Caco-2 (cell line): ENCODE measurements at regions of chr10 and their contacts with region 1.

Region 1: DNA sequence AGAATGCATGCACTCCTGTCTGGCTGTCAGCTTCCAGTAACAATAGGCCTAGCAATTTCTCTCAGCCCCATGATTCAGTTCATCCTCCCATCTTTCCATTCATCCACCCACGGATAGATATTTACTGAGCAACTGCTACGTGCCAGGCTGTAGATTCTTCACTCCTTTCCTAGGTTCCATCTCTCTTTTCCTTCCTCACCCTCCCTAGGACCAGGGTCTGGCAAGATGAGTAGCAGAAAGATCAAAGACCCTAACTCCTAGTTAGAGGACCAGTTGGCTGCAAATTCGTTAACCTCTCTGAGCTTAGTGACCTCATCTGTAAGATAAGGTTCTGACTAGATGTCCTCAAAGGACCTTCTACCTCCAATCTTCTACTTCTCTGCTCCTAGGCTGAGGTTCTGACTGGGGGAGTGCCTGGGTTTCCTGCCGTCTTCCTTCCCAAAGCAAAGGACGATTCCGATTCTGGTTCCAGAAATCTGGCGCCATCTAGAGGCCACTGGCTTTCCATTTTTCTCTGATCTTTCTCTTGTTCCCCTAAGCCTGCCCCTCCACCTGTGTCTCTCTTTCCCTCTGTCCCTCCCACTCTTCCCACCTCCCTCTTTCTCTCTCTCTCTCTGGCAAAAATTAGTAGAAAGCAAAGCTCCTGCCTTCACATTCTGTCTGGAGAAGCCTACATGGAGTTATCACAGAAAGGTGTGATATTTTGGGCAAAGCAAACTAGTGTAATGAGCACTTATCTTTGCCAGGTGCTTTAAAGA is 26.2 kb downstream of the TBATA start:
- DNase-seq: peak; percentile 79 to 85
- H3K4me3 ChIP-seq: no peak overlapping the region
- H3K4me3 Mint-ChIP-seq: no peak overlapping the region
- H3K27ac Mint-ChIP-seq: no peak overlapping the region
- H3K4me1 ChIP-seq: 0 out of 2 replicates have a peak, but pooled peaks cover 5% of the 10 kb centered on the region
- H3K4me1 Mint-ChIP-seq: peaks cover 13% of the 10 kb centered on the region
- H3K27me3 ChIP-seq: no peaks in the 10 kb centered on the region
- H3K27me3 Mint-ChIP-seq: no peaks in the 10 kb centered on the region
- CTCF ChIP-seq: peak; percentile 94 to 96

Region 2: GRCh38 chr10:69222157-69223027 is 1536.5 kb before region 1 on chr10:
- CTCF ChIA-PET with region 1: interaction called, 10 read pairs
- POLR2A ChIA-PET with region 1: no interaction called
- intact Hi-C with region 1: no loop called
- DNase-seq: peak; percentile 89 to 96
- H3K4me3 ChIP-seq: no peak overlapping the region
- H3K4me3 Mint-ChIP-seq: peak overlapping the region; percentile 68
- H3K27ac Mint-ChIP-seq: peak overlapping the region; percentile 86
- H3K4me1 ChIP-seq: peaks cover 60% of the 10 kb centered on the region
- H3K4me1 Mint-ChIP-seq: peaks cover 24% of the 10 kb centered on the region
- H3K27me3 ChIP-seq: no peaks in the 10 kb centered on the region
- H3K27me3 Mint-ChIP-seq: no peaks in the 10 kb centered on the region
- CTCF ChIP-seq: peak; percentile 84 to 89

Region 3: GRCh38 chr10:70461215-70461986 is 297.5 kb before region 1 on chr10:
- CTCF ChIA-PET with region 1: interaction called, 6 read pairs
- POLR2A ChIA-PET with region 1: no interaction called
- intact Hi-C with region 1: loop called (anchors 1 kb)
- DNase-seq: peak; percentile 76 to 81
- H3K4me3 ChIP-seq: no peak overlapping the region
- H3K4me3 Mint-ChIP-seq: no peak overlapping the region
- H3K27ac Mint-ChIP-seq: no peak overlapping the region
- H3K4me1 ChIP-seq: no peaks in the 10 kb centered on the region; the same call in 1 of the 2 replicates
- H3K4me1 Mint-ChIP-seq: peaks cover 14% of the 10 kb centered on the region
- H3K27me3 ChIP-seq: no peaks in the 10 kb centered on the region
- H3K27me3 Mint-ChIP-seq: no peaks in the 10 kb centered on the region
- CTCF ChIP-seq: peak; percentile 97 to 99

Region 4: GRCh38 chr10:70558871-70559810 is 199.8 kb before region 1 on chr10:
- CTCF ChIA-PET with region 1: interaction called, 4 read pairs
- POLR2A ChIA-PET with region 1: no interaction called
- intact Hi-C with region 1: loop called (anchors 2 kb)
- DNase-seq: peak; percentile 65 to 70
- H3K4me3 ChIP-seq: no peak overlapping the region
- H3K4me3 Mint-ChIP-seq: no peak overlapping the region
- H3K27ac Mint-ChIP-seq: peak overlapping the region; percentile 13
- H3K4me1 ChIP-seq: 0 out of 2 replicates have a peak, but pooled peaks cover 4% of the 10 kb centered on the region
- H3K4me1 Mint-ChIP-seq: peaks cover 16% of the 10 kb centered on the region
- H3K27me3 ChIP-seq: no peaks in the 10 kb centered on the region
- H3K27me3 Mint-ChIP-seq: no peaks in the 10 kb centered on the region
- CTCF ChIP-seq: peak in 1 of 2 experiments; percentile 65

Region 5: DNA sequence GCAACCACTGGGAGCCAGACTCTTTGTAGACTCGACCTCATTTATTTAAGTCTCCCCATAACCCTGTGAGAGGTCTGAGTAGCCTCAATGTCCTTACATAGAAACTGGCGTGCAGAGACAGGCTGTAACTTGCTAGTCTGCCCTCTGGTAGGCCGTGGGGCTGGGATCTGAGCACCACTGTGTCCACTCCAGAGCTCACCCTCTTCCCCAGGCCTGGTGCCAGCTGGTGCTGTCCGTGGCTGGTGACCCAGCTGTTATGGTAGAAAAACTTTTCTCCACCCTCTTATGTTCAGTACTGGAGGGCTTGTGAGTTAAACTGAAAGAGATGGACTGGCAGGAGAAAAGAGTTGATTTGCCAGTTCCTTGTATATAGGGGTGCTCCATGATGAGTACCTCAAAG is 44.7 kb before region 1 on chr10:
- CTCF ChIA-PET with region 1: no interaction called
- POLR2A ChIA-PET with region 1: no interaction called
- intact Hi-C with region 1: no loop called
- DNase-seq: no peak
- H3K4me3 ChIP-seq: no peak overlapping the region
- H3K4me3 Mint-ChIP-seq: no peak overlapping the region
- H3K27ac Mint-ChIP-seq: no peak overlapping the region
- H3K4me1 ChIP-seq: peaks cover 17% of the 10 kb centered on the region
- H3K4me1 Mint-ChIP-seq: peaks cover 20% of the 10 kb centered on the region
- H3K27me3 ChIP-seq: no peaks in the 10 kb centered on the region
- H3K27me3 Mint-ChIP-seq: no peaks in the 10 kb centered on the region
- CTCF ChIP-seq: no peak

Region 6: GRCh38 chr10:70777063-70777875 is 18.3 kb after region 1 on chr10:
- CTCF ChIA-PET with region 1: interaction called, 10 read pairs
- POLR2A ChIA-PET with region 1: no interaction called
- intact Hi-C with region 1: no loop called
- DNase-seq: peak; percentile 46 to 62
- H3K4me3 ChIP-seq: no peak overlapping the region
- H3K4me3 Mint-ChIP-seq: no peak overlapping the region
- H3K27ac Mint-ChIP-seq: no peak overlapping the region
- H3K4me1 ChIP-seq: peaks cover 16% of the 10 kb centered on the region
- H3K4me1 Mint-ChIP-seq: no peaks in the 10 kb centered on the region
- H3K27me3 ChIP-seq: no peaks in the 10 kb centered on the region
- H3K27me3 Mint-ChIP-seq: no peaks in the 10 kb centered on the region
- CTCF ChIP-seq: no peak